ENCODE measurements at regions of chr11 and their contacts with region 1.

Region 1: GRCh38 chr11:64317957-64318693 is at the start of gene PRDX5:
- DNase-seq: peak; percentile 97 to 99
- ATAC-seq: peak; percentile 88 to 91 (median 88)
- H3K4me3 ChIP-seq: peak within 1 kb of the TSS; percentile 86
- H3K27ac ChIP-seq: peak within 1 kb of the TSS; percentile 99
- H3K4me1 ChIP-seq: peaks cover 17% of the 10 kb centered on the region
- H3K27me3 ChIP-seq: no peaks in the 10 kb centered on the region
- CTCF ChIP-seq: peak; percentile 38
- total RNA-seq, gene PRDX5: 122 to 178 (median 156) TPM

Region 2: DNA sequence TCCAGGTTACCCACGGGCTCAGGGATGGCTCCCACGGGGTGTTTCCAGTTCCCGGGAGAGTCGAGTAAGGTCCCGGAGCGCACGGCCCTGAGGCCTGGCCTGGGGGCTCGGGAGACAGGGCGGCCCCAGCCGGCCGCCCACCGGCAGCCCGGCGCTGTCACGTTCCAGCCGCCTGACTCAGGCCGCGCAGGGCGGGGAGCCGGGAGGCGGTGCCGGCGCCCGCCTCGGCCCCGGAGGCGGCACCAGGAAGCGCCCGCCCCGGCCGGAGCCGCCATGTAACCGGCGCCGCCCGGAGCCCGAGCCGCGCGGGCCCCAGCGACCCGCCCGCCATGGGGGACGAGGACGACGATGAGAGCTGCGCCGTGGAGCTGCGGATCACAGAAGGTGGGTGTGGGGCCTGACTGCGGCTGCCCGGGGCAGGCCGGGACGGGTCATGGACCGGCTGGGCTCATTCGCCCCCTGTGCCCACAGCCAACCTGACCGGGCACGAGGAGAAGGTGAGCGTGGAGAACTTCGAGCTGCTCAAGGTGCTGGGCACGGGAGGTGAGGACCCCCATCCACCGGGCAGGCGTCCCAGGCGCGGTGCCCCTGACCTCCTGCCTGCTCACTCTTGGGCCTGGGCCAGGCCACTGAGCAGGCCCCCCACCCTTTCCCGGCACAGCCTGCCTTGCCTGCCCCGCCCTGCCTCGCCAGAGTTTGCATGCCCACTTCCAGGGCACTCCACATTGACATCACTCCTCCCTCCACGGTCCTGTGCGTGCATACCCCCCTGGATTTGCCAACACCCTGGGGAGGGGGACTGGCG is 41.0 kb after region 1 on chr11 and contains the start of gene RPS6KA4:
- intact Hi-C with region 1: loop called (anchors 2 to 5 kb)
- DNase-seq: peak; percentile 71 to 83
- ATAC-seq: peak; percentile 73 to 88 (median 86)
- H3K4me3 ChIP-seq: peak within 1 kb of the TSS; percentile 95
- H3K27ac ChIP-seq: peak within 1 kb of the TSS; percentile 90
- H3K4me1 ChIP-seq: peaks cover 6% of the 10 kb centered on the region
- H3K27me3 ChIP-seq: no peaks in the 10 kb centered on the region
- CTCF ChIP-seq: no peak
- total RNA-seq, gene RPS6KA4: 9.5 to 15.9 (median 13.6) TPM